MCF 10A (cell line): ENCODE measurements at regions of chr2 and their contacts with region 1.

Region 1: GRCh38 chr2:201795607-201796477 is 10.5 kb upstream of the CDK15 start:
- DNase-seq: peak; percentile 57
- H3K4me3 Mint-ChIP-seq: no peak overlapping the region
- H3K27ac Mint-ChIP-seq: no peak overlapping the region
- H3K4me1 Mint-ChIP-seq: peaks cover 12% of the 10 kb centered on the region
- H3K27me3 Mint-ChIP-seq: no peaks in the 10 kb centered on the region
- CTCF ChIP-seq: peak; percentile 74

Region 2: DNA sequence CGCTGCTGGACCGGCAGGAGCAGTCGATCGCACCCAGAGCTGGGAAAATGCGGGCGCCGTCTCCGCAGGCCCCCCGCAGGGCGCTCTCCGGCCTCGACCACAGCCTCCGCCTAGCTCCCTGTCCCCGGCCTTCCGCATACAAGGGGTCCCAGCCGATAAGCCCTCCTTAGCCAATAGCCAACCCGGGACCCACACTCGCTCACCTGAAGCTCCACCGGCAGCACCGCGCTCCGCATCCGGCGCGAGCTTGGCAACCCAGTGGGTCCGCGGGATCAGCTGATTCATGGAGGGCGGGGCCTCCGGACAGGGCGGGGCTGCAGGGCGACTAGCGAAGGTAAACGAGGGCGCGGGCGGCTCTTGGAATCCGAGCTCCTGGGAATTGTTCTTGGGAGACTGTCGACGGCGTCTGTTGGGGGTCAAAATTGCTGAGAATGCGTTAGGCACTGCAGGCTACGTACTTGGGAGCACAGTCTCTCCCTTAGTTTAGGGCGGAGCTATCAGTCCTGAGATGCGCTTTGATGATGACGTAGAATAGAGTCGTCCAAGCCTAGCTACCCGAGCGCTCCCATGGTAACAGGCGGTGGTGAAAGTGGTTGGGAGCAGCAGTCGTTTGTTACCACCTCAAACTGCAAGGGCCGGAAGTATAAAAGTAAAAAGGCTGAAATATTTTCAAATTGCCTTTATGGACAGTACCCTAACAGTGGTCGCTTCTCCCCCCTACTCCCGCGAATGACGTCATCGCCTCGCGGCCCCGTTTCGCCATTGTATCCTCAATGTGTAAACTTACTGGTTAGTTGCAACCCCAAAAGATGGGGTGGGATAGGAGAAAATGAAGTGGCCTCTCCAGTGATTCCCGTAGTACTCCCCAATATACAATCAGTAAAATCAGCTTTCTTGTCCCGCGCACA is 14.9 kb before region 1 on chr2 and contains the start of gene ALS2:
- CTCF ChIA-PET with region 1: interaction called, 8 read pairs
- POLR2A ChIA-PET with region 1: interaction called, 16 read pairs
- intact Hi-C with region 1: no loop called
- DNase-seq: peak; percentile 98
- H3K4me3 Mint-ChIP-seq: peak within 1 kb of the TSS; percentile 95
- H3K27ac Mint-ChIP-seq: peak within 1 kb of the TSS; percentile 97
- H3K4me1 Mint-ChIP-seq: peaks cover 13% of the 10 kb centered on the region
- H3K27me3 Mint-ChIP-seq: no peaks in the 10 kb centered on the region
- CTCF ChIP-seq: no peak
- total RNA-seq, gene ALS2: 14.6 and 20.7 TPM in 2 replicates

Region 3: DNA sequence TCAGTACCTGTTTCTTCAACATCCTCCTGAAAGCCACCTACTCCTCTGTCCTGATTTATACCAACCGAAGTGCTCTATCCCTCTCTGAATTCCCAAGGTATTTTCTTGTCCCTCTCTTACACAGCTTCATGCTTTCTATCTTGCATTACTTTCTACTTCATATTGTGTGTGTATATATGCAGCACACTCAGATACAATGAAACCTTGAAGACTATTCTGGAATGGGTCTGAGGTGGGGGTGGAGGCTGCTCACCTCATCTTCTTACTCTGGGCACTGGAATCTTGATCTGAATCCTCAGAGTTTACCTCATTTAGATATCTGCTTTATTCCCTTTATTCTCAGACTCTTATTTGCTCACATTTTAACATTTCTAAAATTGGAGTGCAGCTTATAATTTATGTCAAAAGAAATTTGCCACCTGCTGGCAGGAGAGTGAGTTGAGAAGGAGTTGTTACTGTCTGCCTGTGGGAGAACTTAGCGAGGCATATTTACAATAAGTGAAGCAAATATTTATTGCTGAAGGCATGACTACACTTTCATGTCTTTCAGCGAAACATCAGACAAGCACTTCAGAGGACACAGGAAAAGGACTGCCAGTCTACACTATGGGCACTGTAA is 260.7 kb after region 1 on chr2:
- CTCF ChIA-PET with region 1: interaction called, 4 read pairs
- POLR2A ChIA-PET with region 1: no interaction called
- intact Hi-C with region 1: loop called (anchors 2 kb)
- DNase-seq: peak; percentile 17
- H3K4me3 Mint-ChIP-seq: no peak overlapping the region
- H3K27ac Mint-ChIP-seq: no peak overlapping the region
- H3K4me1 Mint-ChIP-seq: no peaks in the 10 kb centered on the region
- H3K27me3 Mint-ChIP-seq: peaks cover 65% of the 10 kb centered on the region
- CTCF ChIP-seq: peak; percentile 27

Region 4: DNA sequence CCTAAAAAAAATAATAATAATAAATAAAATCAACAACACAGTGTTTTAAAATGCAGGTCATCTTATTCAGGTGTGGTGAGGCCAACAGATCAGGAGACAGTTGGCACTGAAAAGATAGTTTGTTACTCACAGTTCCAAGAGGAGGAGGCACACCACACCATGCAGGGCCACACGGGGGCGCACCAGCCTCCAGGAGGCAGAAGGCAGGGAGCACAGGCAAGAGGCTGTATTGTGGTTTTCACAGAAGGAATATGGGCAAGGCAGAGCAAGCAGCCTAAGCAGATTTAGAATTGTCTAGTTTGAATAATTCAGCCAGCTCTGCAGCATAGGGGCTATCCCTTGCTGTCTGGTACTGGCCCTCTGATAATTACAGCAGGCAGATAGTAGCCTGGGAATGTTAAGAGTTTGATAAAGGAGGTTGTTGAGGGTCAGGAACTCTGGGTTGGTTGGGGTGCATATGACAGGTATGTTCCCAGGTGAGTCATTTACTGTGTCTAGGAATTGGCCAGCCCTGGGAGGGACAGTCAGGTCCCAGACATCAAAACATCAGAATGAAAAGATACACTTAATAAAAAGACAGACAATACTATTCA is 308.5 kb after region 1 on chr2:
- CTCF ChIA-PET with region 1: no interaction called
- POLR2A ChIA-PET with region 1: no interaction called
- intact Hi-C with region 1: loop called (anchors 5 kb)
- DNase-seq: peak; percentile 69
- H3K4me3 Mint-ChIP-seq: no peak overlapping the region
- H3K27ac Mint-ChIP-seq: no peak overlapping the region
- H3K4me1 Mint-ChIP-seq: no peaks in the 10 kb centered on the region
- H3K27me3 Mint-ChIP-seq: peaks cover 18% of the 10 kb centered on the region
- CTCF ChIP-seq: peak; percentile 55

Region 5: DNA sequence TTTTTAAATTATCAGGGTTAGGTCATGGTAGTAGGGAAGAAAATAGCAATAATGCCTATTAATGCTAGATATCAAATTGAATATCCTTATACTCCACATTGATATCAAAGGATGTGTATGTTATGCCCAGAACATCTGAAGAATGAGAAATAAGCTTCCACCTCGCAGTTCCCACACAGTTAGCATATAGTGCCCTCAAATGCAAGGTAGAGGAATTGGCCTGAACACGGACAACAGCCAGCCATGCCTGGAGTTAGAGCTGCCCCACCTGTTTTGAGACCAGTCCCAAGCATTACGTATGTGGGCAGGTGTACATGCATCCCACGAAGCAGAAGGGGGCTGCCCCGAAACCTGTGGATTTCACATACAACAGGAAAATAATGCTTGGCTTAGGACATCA is 363.0 kb after region 1 on chr2:
- CTCF ChIA-PET with region 1: interaction called, 3 read pairs
- POLR2A ChIA-PET with region 1: no interaction called
- intact Hi-C with region 1: loop called (anchors 5 kb)
- DNase-seq: peak; percentile 26
- H3K4me3 Mint-ChIP-seq: no peak overlapping the region
- H3K27ac Mint-ChIP-seq: no peak overlapping the region
- H3K4me1 Mint-ChIP-seq: no peaks in the 10 kb centered on the region
- H3K27me3 Mint-ChIP-seq: peaks cover 10% of the 10 kb centered on the region
- CTCF ChIP-seq: no peak